ENCODE measurements at regions of chr7 and their contacts with region 1.

Region 1: GRCh38 chr7:142108728-142109505 is 2.6 kb upstream of the MGAM2 start:
- DNase-seq: no peak
- H3K4me3 ChIP-seq: no peak overlapping the region
- H3K27ac ChIP-seq: no peak overlapping the region
- H3K4me1 ChIP-seq: peaks cover 10% of the 10 kb centered on the region
- H3K27me3 ChIP-seq: no peaks in the 10 kb centered on the region
- CTCF ChIP-seq: no peak

Region 2: DNA sequence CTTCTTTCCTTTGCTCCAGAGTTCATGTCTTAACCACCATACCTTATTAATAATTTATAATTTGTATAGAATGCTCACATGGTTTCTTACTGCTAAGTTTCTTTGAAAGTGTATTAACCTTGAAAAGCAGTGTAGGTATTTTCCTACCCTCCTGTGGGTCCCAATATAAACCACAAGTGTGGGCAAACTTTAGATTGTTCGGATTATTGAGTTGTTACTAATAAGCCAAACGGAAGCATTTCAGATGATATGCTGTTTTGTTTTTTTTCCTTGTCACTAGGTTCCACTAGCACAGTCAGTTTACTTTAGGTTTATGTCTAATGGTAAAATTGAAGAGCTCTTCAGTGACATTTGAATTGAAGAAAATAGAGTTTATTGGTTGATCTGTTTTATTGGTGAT is 360.5 kb before region 1 on chr7:
- CTCF ChIA-PET with region 1: interaction called, 10 read pairs
- dilution Hi-C with region 1: no loop called
- in situ Hi-C with region 1: no loop called
- intact Hi-C with region 1: no loop called
- DNase-seq: no peak
- H3K4me3 ChIP-seq: no peak overlapping the region
- H3K27ac ChIP-seq: no peak overlapping the region
- H3K4me1 ChIP-seq: no peaks in the 10 kb centered on the region
- H3K27me3 ChIP-seq: no peaks in the 10 kb centered on the region
- CTCF ChIP-seq: no peak

Region 3: GRCh38 chr7:142077762-142078161 is 31.2 kb before region 1 on chr7:
- CTCF ChIA-PET with region 1: no interaction called
- dilution Hi-C with region 1: no loop called
- in situ Hi-C with region 1: no loop called
- intact Hi-C with region 1: no loop called
- DNase-seq: no peak
- H3K4me3 ChIP-seq: no peak overlapping the region
- H3K27ac ChIP-seq: no peak overlapping the region
- H3K4me1 ChIP-seq: no peaks in the 10 kb centered on the region
- H3K27me3 ChIP-seq: no peaks in the 10 kb centered on the region
- CTCF ChIP-seq: no peak

Measured in mammary epithelial cell (primary cell).